ENCODE measurements at regions of chr1 and their contacts with region 1.

Region 1: GRCh38 chr1:234108921-234109320 is 204.4 kb downstream of the SLC35F3 start:
- DNase-seq: peak; percentile 93
- ATAC-seq: peak; percentile 93
- H3K4me3 ChIP-seq: no peak overlapping the region
- H3K27ac ChIP-seq: peak overlapping the region; percentile 86
- H3K4me1 ChIP-seq: peaks cover 26% of the 10 kb centered on the region
- H3K27me3 ChIP-seq: no peaks in the 10 kb centered on the region
- CTCF ChIP-seq: no peak

Region 2: GRCh38 chr1:233394860-233395717 is 713.8 kb before region 1 on chr1:
- CTCF ChIA-PET with region 1: no interaction called
- POLR2A ChIA-PET with region 1: no interaction called
- intact Hi-C with region 1: loop called (anchors 1 kb)
- DNase-seq: peak; percentile 90
- ATAC-seq: peak; percentile 97
- H3K4me3 ChIP-seq: no peak overlapping the region
- H3K27ac ChIP-seq: no peak overlapping the region
- H3K4me1 ChIP-seq: 0 out of 2 replicates have a peak, but pooled peaks cover 3% of the 10 kb centered on the region
- H3K27me3 ChIP-seq: no peaks in the 10 kb centered on the region
- CTCF ChIP-seq: peak; percentile 98

Region 3: DNA sequence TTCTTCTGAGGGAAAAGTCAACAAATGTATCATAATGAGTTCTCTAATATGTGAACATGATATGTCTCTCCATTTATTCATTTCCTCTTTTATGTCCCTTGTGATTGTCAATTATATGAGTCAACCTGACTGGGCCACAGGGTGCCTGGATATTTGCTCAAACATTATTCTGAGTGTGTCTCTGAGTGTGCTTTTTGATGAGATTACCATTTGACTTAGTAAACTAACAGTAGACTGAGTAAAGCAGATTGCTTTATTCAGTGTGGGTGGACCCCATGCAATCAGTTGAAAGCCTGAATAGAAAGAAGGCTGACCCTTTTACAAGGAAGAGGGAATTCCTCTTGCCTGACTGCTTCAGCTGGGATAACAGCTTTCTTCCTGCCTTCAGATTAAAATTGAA is 61.8 kb before region 1 on chr1:
- CTCF ChIA-PET with region 1: interaction called, 3 read pairs
- POLR2A ChIA-PET with region 1: no interaction called
- intact Hi-C with region 1: loop called (anchors 1 kb)
- DNase-seq: peak; percentile 97
- ATAC-seq: peak; percentile 97
- H3K4me3 ChIP-seq: no peak overlapping the region
- H3K27ac ChIP-seq: peak overlapping the region; percentile 97
- H3K4me1 ChIP-seq: peaks cover 33% of the 10 kb centered on the region
- H3K27me3 ChIP-seq: no peaks in the 10 kb centered on the region
- CTCF ChIP-seq: no peak

Region 4: GRCh38 chr1:234499119-234499942 is 390.4 kb after region 1 on chr1:
- CTCF ChIA-PET with region 1: no interaction called
- POLR2A ChIA-PET with region 1: no interaction called
- intact Hi-C with region 1: no loop called
- DNase-seq: peak; percentile 82
- ATAC-seq: peak; percentile 72
- H3K4me3 ChIP-seq: peak overlapping the region; percentile 40; the same call in 1 of the 2 replicates
- H3K27ac ChIP-seq: peak overlapping the region; percentile 88
- H3K4me1 ChIP-seq: peaks cover 46% of the 10 kb centered on the region
- H3K27me3 ChIP-seq: no peaks in the 10 kb centered on the region
- CTCF ChIP-seq: peak; percentile 84

Measured in PC-3 (cell line).